Ovary (tissue), 10 donors: ENCODE measurements at regions of chr3 and their contacts with region 1.

Region 1: DNA sequence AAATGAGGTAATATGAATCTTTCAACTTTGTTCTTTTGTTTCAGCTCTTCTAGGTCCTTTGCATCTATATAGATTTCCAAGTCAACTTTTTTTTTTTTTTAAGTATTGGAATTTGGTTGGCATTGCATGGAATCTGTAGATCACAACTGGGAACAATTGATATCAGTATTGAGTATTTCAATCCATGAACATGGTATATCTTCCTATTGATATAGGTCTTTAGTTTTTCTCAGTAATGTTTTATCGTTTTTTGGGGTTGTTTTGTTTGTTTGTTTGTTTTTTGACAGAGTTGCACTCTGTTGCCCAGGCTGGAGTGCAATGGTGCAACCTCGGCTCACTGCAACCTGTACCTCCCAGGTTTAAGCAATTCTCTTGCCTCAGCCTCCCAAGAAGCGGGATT is 137.2 kb downstream of the EEFSEC start:
- DNase-seq: no peak
- H3K4me3 ChIP-seq: no peak overlapping the region
- H3K27ac ChIP-seq: no peak overlapping the region
- H3K4me1 ChIP-seq: no peaks in the 10 kb centered on the region
- H3K27me3 ChIP-seq: no peaks in the 10 kb centered on the region
- CTCF ChIP-seq: no peak
- EP300 ChIP-seq: no peak
- POLR2A ChIP-seq: no peak

Region 2: GRCh38 chr3:128327606-128328031 is 37.1 kb after region 1 on chr3:
- intact Hi-C with region 1: loop called in 1 of 4 experiments (anchors 2 kb)
- DNase-seq: peak in 1 of 5 donors; percentile 3
- H3K4me3 ChIP-seq: no peak overlapping the region
- H3K27ac ChIP-seq: no peak overlapping the region
- H3K4me1 ChIP-seq: peaks cover 13% of the 10 kb centered on the region
- H3K27me3 ChIP-seq: no peaks in the 10 kb centered on the region
- CTCF ChIP-seq: no peak
- EP300 ChIP-seq: no peak
- POLR2A ChIP-seq: no peak